Panc1 (cell line): ENCODE measurements at regions of chr2 and their contacts with region 1.

Region 1: DNA sequence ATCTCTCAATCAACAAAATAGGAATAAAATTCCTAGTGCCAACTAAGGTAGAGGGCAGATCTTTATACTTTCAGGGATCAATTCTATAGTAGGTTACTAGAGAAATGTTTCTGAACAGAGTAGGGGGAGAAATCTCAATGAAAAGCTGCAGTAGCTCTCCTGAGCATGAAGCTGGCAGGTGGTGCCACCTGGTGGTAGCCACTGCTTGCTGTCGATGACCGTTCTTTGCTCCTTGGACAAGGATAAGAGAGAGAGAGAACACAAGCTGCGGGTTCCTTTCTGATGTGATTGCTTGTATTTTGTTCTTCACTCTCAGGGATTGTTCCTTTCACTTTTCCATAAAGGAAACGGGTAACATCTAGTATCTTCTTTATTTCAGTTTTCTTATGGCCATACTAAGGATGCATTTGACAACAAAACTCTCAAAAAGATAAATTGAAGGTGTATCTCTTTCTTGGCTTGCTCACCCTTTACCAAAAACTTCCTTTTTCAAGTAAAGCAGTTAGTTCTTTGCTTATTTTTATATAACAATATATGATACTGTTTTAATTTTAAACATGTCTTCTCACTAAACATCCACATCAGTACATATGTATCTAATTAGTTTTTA is 18.6 kb upstream of the MRPL19 start:
- DNase-seq: peak; percentile 61
- ATAC-seq: peak; percentile 96
- H3K4me3 ChIP-seq: no peak overlapping the region
- H3K27ac ChIP-seq: no peak overlapping the region
- H3K4me1 ChIP-seq: no peaks in the 10 kb centered on the region
- H3K27me3 ChIP-seq: peaks cover 8% of the 10 kb centered on the region
- CTCF ChIP-seq: peak; percentile 93

Region 2: GRCh38 chr2:75464348-75464946 is 163.6 kb before region 1 on chr2:
- CTCF ChIA-PET with region 1: no interaction called
- POLR2A ChIA-PET with region 1: no interaction called
- in situ Hi-C with region 1: no loop called
- intact Hi-C with region 1: loop called (anchors 1 kb)
- DNase-seq: no peak
- ATAC-seq: 0 out of 2 replicates have a peak, but pooled peaks have one; percentile 62
- H3K4me3 ChIP-seq: no peak overlapping the region
- H3K27ac ChIP-seq: no peak overlapping the region
- H3K4me1 ChIP-seq: no peaks in the 10 kb centered on the region
- H3K27me3 ChIP-seq: peaks cover 16% of the 10 kb centered on the region
- CTCF ChIP-seq: peak; percentile 68